Heart left ventricle (tissue), 16 donors: ENCODE measurements at regions of chr15 and their contacts with region 1.

Region 1: DNA sequence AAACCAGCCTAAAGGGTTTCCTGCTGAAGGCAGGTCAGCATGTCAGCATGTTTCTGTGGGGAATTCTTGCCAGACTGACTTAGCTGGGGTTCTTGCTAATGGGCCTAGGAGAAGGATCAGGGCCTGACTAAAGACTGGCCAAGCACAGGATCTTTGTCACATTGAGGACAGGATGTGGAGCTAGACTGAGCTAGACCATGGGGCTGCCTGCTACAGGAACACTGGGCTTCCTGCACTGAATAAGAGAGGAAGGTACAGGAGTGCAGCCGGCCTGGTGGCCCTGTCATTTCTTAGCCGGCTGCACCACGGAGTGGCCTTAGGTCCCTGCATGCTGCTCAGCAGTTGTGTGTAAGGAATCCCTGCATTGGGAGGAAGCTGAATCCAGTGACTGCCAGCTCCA is 68.2 kb downstream of the GABRG3 start:
- DNase-seq: no peak
- ATAC-seq: no peak
- H3K4me3 ChIP-seq: no peak overlapping the region
- H3K27ac ChIP-seq: no peak overlapping the region
- H3K4me1 ChIP-seq: no peaks in the 10 kb centered on the region
- H3K27me3 ChIP-seq: no peaks in the 10 kb centered on the region
- CTCF ChIP-seq: no peak
- POLR2A ChIP-seq: no peak

Region 2: DNA sequence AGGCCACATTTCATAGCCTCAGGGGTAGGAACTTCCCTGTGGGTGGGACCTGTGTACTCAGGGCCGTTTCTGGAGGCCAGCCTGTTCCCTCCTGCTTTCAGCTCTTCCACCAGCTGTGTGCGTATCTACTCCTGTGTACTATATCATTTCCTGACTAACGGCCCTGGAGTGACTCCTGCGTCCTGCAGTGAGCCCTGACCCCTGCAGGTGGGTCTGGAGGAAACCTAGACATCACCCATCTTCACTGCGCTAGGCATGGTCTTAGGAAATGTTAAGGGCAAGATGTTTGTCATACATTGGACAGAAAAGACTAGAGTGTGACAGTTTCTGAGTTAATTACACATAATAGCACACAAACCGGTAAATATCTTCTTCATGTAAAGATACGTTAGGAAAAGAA is 563.6 kb before region 1 on chr15:
- intact Hi-C with region 1: no loop called
- DNase-seq: no peak
- ATAC-seq: no peak
- H3K4me3 ChIP-seq: no peak overlapping the region
- H3K27ac ChIP-seq: no peak overlapping the region
- H3K4me1 ChIP-seq: peaks cover 0 to 8% (median 0%) of the 10 kb centered on the region in 12 donors
- H3K27me3 ChIP-seq: no peaks in the 10 kb centered on the region
- CTCF ChIP-seq: no peak
- POLR2A ChIP-seq: no peak

Region 3: GRCh38 chr15:26974120-26974780 is 64.9 kb before region 1 on chr15:
- intact Hi-C with region 1: loop called in 1 of 10 experiments (anchors 10 kb)
- DNase-seq: no peak
- ATAC-seq: no peak
- H3K4me3 ChIP-seq: no peak overlapping the region
- H3K27ac ChIP-seq: no peak overlapping the region
- H3K4me1 ChIP-seq: peaks cover 0 to 10% (median 0%) of the 10 kb centered on the region in 12 donors
- H3K27me3 ChIP-seq: peaks cover 4 to 35% (median 21%) of the 10 kb centered on the region in 9 donors
- CTCF ChIP-seq: peak in 7 of 12 donors; percentile 7 to 33 (median 14)
- POLR2A ChIP-seq: no peak

Region 4: GRCh38 chr15:26985050-26985449 is 54.1 kb before region 1 on chr15:
- intact Hi-C with region 1: no loop called
- DNase-seq: no peak
- ATAC-seq: no peak
- H3K4me3 ChIP-seq: no peak overlapping the region
- H3K27ac ChIP-seq: no peak overlapping the region
- H3K4me1 ChIP-seq: no peaks in the 10 kb centered on the region
- H3K27me3 ChIP-seq: peaks cover 0 to 6% (median 0%) of the 10 kb centered on the region in 9 donors
- CTCF ChIP-seq: no peak
- POLR2A ChIP-seq: no peak

Region 5: DNA sequence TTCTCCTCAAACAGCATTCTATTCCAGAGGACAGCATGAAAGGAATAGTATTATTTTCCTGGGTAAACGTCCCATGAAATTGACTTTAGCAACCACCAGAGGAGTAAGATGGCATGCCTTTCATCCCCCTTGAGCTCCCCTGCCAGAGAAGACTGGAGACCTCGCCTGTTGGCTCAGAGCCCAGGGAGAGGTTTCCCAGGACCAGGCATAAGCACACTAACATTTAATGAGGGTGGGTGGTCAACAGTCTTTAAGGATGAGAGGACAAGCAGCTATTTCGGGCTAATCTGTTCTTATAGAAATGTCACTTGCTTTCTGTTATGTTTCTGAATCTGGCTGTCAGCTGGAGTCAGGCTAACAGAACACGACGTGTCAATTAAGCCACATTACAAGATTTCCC is 322.3 kb after region 1 on chr15:
- intact Hi-C with region 1: no loop called
- DNase-seq: no peak
- ATAC-seq: no peak
- H3K4me3 ChIP-seq: no peak overlapping the region
- H3K27ac ChIP-seq: no peak overlapping the region
- H3K4me1 ChIP-seq: no peaks in the 10 kb centered on the region
- H3K27me3 ChIP-seq: peaks cover 0 to 26% (median 0%) of the 10 kb centered on the region in 9 donors
- CTCF ChIP-seq: no peak
- POLR2A ChIP-seq: no peak

Region 6: GRCh38 chr15:27509014-27509413 is 469.9 kb after region 1 on chr15:
- intact Hi-C with region 1: no loop called
- DNase-seq: no peak
- ATAC-seq: no peak
- H3K4me3 ChIP-seq: no peak overlapping the region
- H3K27ac ChIP-seq: no peak overlapping the region
- H3K4me1 ChIP-seq: no peaks in the 10 kb centered on the region
- H3K27me3 ChIP-seq: no peaks in the 10 kb centered on the region
- CTCF ChIP-seq: no peak
- POLR2A ChIP-seq: no peak